Heart right ventricle (tissue), 16 donors: ENCODE measurements at regions of chr15 and their contacts with region 1.

Region 1: GRCh38 chr15:22838292-22839042 is at the start of gene NIPA2:
- DNase-seq: peak; percentile 98 to 99
- ATAC-seq: peak; percentile 99 to 100 (median 99)
- H3K4me3 ChIP-seq: peak within 1 kb of the TSS; percentile 53 to 96 (median 86)
- H3K27ac ChIP-seq: peak within 1 kb of the TSS; percentile 79 to 99 (median 96)
- H3K4me1 ChIP-seq: peaks cover 0 to 32% (median 22%) of the 10 kb centered on the region in 9 donors
- H3K27me3 ChIP-seq: no peaks in the 10 kb centered on the region
- CTCF ChIP-seq: peak in 2 of 9 donors; percentile 21 to 22
- total RNA-seq, gene NIPA2: 16.3 to 30.3 (median 19.3) TPM

Region 2: DNA sequence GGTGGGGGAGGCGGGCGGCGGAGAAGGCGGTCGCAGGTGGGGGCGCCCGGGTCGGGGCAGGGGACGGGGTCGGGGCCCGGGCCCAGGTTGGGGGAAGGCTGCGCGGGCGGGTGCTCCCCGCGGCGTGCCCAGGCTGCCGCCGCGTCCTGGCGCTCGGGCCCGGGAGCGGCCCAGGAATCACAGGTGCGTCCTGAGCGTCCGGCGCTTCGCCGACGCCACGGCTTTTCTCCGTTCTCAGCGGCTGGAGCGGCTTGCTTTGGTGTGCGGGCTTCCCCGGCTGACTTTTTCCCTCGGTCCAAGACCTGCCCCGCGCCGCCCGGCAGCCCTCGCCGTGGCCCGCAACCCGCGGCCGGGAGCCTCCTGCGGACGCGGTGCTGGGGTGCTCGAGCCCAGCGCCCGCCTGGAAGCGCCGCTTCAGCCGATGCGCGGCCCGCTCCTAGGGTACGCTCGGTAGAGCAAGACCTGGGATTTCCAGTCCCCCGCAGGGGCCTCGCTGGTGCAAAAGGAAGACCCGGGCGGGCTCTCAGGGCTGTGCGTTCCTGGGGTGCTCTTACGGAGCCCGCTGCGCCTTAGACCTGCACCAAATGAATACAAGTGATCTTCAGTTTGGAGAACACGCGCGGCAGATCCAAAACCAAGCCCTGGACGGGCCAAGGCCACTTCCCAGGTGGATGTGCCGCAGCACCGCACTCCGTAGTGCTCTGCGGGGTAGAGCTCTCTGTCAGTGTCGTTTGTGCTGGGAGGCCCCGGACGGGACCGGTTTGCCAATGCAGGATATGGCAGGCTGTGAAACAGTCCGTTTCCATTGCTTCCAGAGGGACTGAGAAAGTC is 51.4 kb before region 1 on chr15:
- intact Hi-C with region 1: loop called in 5 of 10 experiments (anchors 1 to 10 kb)
- DNase-seq: peak in 1 of 2 donors; percentile 26
- ATAC-seq: peak in 7 of 8 donors; percentile 17 to 39 (median 27)
- H3K4me3 ChIP-seq: peak overlapping the region; percentile 68 to 92 (median 80)
- H3K27ac ChIP-seq: peak overlapping the region; percentile 72 to 97 (median 88)
- H3K4me1 ChIP-seq: peaks cover 0 to 17% (median 7%) of the 10 kb centered on the region in 9 donors
- H3K27me3 ChIP-seq: no peaks in the 10 kb centered on the region
- CTCF ChIP-seq: no peak

Region 3: GRCh38 chr15:22878103-22878502 is 39.6 kb after region 1 on chr15:
- intact Hi-C with region 1: loop called in 1 of 10 experiments (anchors 5 kb)
- DNase-seq: no peak
- ATAC-seq: no peak
- H3K4me3 ChIP-seq: no peak overlapping the region
- H3K27ac ChIP-seq: no peak overlapping the region
- H3K4me1 ChIP-seq: peaks cover 0 to 12% (median 0%) of the 10 kb centered on the region in 9 donors
- H3K27me3 ChIP-seq: no peaks in the 10 kb centered on the region
- CTCF ChIP-seq: no peak

Region 4: GRCh38 chr15:22949074-22949547 is 110.6 kb after region 1 on chr15:
- intact Hi-C with region 1: loop called in 1 of 10 experiments (anchors 10 kb)
- DNase-seq: peak; percentile 74 to 84
- ATAC-seq: peak; percentile 65 to 88 (median 80)
- H3K4me3 ChIP-seq: peak overlapping the region in 6 of 10 donors; percentile 14 to 39 (median 32)
- H3K27ac ChIP-seq: peak overlapping the region in 9 of 10 donors; percentile 62 to 81 (median 66)
- H3K4me1 ChIP-seq: peaks cover 4 to 82% (median 64%) of the 10 kb centered on the region in 9 donors
- H3K27me3 ChIP-seq: no peaks in the 10 kb centered on the region
- CTCF ChIP-seq: no peak

Region 5: DNA sequence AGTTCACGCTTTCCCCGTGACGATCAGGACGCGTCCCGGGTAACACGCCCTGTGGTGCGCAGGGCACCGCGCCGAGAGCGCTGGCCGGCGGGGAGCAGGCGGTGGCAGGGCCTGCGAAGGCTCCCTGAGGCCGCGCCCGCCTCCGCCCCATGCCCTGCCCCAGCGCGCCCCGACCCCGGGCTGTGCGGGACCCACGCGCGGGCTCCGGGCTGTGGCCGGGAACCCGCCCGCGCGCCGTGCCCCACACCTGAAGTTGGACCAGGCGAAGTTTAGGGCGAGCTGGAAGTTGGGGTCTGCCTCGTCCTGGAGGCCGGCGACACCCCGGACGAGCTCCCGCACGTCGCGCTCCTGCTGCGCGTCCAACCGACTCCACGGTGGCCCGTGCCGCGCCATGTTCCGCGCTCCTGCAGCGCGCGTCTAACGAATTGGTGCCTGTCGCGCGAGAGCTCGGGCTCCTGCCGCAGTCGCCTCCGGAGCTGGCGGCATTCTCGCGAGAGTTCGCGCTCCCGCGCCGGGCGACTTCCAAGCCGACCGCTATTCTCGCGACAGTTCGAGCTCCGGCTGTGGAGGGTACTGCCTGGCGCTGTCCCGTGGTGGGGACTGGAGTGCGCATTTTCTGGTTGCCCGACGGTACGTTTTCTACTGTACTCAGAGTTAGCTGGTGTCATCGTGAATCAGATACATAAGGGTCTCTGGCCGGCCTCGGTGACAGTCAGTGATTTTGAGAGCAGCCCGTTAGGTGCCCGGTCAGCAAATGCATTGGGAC is 200.9 kb after region 1 on chr15 and contains the start of gene TUBGCP5:
- intact Hi-C with region 1: loop called in 2 of 10 experiments (anchors 10 kb)
- DNase-seq: peak; percentile 97 to 99
- ATAC-seq: peak; percentile 97 to 100 (median 99)
- H3K4me3 ChIP-seq: peak within 1 kb of the TSS; percentile 55 to 85 (median 74)
- H3K27ac ChIP-seq: peak within 1 kb of the TSS in 9 of 10 donors; percentile 70 to 96 (median 88)
- H3K4me1 ChIP-seq: peaks cover 0 to 19% (median 16%) of the 10 kb centered on the region in 9 donors
- H3K27me3 ChIP-seq: no peaks in the 10 kb centered on the region
- CTCF ChIP-seq: peak in 7 of 9 donors; percentile 11 to 62 (median 56)
- total RNA-seq, gene TUBGCP5: 10.7 to 17.3 (median 13.6) TPM